ENCODE measurements at regions of chr7 and their contacts with region 1.

Region 1: DNA sequence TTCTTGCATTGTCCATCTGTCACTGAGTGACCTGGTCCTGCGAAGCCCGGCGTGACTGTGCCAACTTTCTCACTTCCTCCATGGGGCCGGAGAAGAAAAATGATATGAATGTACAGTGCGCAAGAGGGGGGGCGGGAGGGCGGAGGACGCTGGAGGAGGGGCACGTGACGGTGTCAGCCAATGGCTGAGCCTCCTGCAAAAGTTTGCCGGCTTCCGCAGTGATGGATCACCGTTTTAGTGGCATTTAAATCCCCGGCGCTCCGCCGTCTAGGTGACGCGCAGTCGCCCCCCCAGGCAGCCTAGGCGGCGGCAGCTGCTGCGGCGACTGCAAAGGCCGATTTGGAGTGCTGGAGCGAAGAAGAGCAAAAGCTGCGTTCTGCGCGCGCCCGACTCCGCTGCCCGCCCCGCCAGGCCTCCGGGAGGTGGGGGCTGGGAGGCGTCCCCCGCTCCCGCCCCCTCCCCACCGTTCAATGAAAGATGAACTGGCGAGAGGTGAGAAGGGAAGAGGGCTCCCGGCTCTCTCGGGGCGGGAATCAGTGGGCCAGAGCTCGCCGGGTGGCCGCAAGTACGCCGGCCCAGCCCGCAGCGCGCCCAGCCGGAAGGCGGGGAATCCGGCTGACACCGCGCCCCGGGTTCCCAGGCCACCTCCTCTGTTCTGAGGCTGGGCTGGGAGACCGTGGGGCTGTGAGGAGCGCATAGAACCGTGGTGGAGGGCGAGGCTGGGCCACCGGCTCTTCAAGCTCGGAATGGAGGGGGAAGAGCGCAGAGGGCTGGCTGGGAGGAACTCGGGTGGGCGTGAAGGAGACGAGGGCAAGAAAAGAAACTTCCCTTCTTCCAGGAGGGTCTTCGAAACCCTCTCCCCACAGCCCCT is at the start of gene HOXA1:
- DNase-seq: peak; percentile 84
- H3K4me3 ChIP-seq: peak within 1 kb of the TSS; percentile 62
- H3K27ac ChIP-seq: peak within 1 kb of the TSS; percentile 76 to 78
- H3K4me1 ChIP-seq: peaks cover 5% of the 10 kb centered on the region
- H3K27me3 ChIP-seq: no peaks in the 10 kb centered on the region
- CTCF ChIP-seq: peak in 1 of 4 experiments; percentile 16
- POLR2A ChIP-seq: peak; percentile 84
- total RNA-seq, gene HOXA1: 2.1 TPM in 1 of 2 donors, not detected in the other

Region 2: GRCh38 chr7:26237035-26237807 is 858.9 kb before region 1 on chr7:
- intact Hi-C with region 1: no loop called
- DNase-seq: no peak
- H3K4me3 ChIP-seq: no peak overlapping the region
- H3K27ac ChIP-seq: no peak overlapping the region
- H3K4me1 ChIP-seq: no peaks in the 10 kb centered on the region
- H3K27me3 ChIP-seq: no peaks in the 10 kb centered on the region
- CTCF ChIP-seq: no peak
- POLR2A ChIP-seq: no peak

Region 3: GRCh38 chr7:26777385-26777784 is 318.7 kb before region 1 on chr7:
- intact Hi-C with region 1: no loop called
- DNase-seq: no peak
- H3K4me3 ChIP-seq: no peak overlapping the region
- H3K27ac ChIP-seq: no peak overlapping the region
- H3K4me1 ChIP-seq: no peaks in the 10 kb centered on the region
- H3K27me3 ChIP-seq: no peaks in the 10 kb centered on the region
- CTCF ChIP-seq: no peak
- POLR2A ChIP-seq: no peak

Region 4: GRCh38 chr7:27112955-27113949 is 17.1 kb after region 1 on chr7:
- intact Hi-C with region 1: loop called (anchors 2 kb)
- DNase-seq: peak; percentile 80
- H3K4me3 ChIP-seq: peak overlapping the region; percentile 50
- H3K27ac ChIP-seq: peak overlapping the region; percentile 80 to 87
- H3K4me1 ChIP-seq: peaks cover 3% of the 10 kb centered on the region
- H3K27me3 ChIP-seq: no peaks in the 10 kb centered on the region
- CTCF ChIP-seq: no peak
- POLR2A ChIP-seq: peak; percentile 65

Region 5: GRCh38 chr7:27172823-27173510 is 76.8 kb after region 1 on chr7:
- intact Hi-C with region 1: no loop called
- DNase-seq: peak; percentile 89
- H3K4me3 ChIP-seq: peak overlapping the region; percentile 61 to 80
- H3K27ac ChIP-seq: peak overlapping the region; percentile 96
- H3K4me1 ChIP-seq: no peaks in the 10 kb centered on the region
- H3K27me3 ChIP-seq: no peaks in the 10 kb centered on the region
- CTCF ChIP-seq: peak in 1 of 4 experiments; percentile 13
- POLR2A ChIP-seq: peak; percentile 68